ENCODE measurements at regions of chr21 and their contacts with region 1.

Region 1: DNA sequence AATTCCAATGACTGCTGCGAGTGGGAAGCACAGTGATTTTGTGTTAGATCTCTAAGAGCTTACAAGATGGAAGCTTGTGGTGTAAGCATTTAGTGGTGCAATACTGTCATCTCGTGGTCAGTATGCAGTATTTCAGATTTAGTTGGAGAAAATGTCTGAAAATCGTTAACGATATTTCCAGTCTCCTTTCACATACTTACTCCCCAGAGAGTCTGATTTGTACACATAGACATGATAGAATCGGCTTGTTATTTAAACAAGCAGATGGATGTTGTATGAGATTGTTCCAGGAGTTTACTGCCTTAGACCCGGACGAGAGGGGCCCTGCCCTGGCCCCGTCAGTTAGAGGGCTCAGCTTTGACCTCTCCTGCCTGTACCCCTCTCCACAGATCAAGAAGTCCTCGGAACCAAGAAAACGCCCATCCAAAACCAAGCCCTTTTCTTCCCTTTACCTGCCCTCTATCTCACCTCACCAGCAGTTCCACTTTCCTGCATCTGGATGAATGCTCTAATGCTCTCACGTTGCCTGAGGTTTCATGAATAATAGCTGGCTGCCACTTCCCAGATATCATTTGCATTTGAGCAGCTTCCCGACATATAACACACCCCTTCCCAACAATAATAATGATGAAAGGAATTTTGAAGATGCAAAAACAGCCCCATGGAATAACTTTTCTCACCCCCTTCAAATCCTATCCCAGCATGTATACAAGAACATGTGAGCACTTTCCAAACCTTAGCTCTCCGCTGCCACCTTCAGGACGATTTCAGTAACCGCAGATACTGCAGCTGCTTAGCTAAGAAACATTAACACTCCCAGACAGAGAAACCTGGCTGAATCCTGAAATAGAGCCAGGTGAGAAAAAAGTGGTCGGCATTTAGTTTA is 247.3 kb downstream of the LTN1 start:
- DNase-seq: peak; percentile 44 to 51
- H3K4me3 ChIP-seq: peak overlapping the region; percentile 37; the same call in 1 of the 2 replicates
- H3K27ac ChIP-seq: no peak overlapping the region
- H3K4me1 ChIP-seq: no peaks in the 10 kb centered on the region
- H3K27me3 ChIP-seq: no peaks in the 10 kb centered on the region
- CTCF ChIP-seq: peak; percentile 74

Region 2: GRCh38 chr21:26769613-26770188 is 1975.7 kb before region 1 on chr21:
- CTCF ChIA-PET with region 1: no interaction called
- POLR2A ChIA-PET with region 1: no interaction called
- intact Hi-C with region 1: loop called (anchors 1 kb)
- DNase-seq: no peak
- H3K4me3 ChIP-seq: no peak overlapping the region
- H3K27ac ChIP-seq: no peak overlapping the region
- H3K4me1 ChIP-seq: no peaks in the 10 kb centered on the region
- H3K27me3 ChIP-seq: no peaks in the 10 kb centered on the region
- CTCF ChIP-seq: peak; percentile 45

Region 3: GRCh38 chr21:27564684-27565301 is 1180.6 kb before region 1 on chr21:
- CTCF ChIA-PET with region 1: no interaction called
- POLR2A ChIA-PET with region 1: no interaction called
- intact Hi-C with region 1: loop called (anchors 1 kb)
- DNase-seq: peak in 1 of 2 experiments; percentile 0
- H3K4me3 ChIP-seq: no peak overlapping the region
- H3K27ac ChIP-seq: no peak overlapping the region
- H3K4me1 ChIP-seq: no peaks in the 10 kb centered on the region
- H3K27me3 ChIP-seq: no peaks in the 10 kb centered on the region
- CTCF ChIP-seq: peak; percentile 47

Region 4: DNA sequence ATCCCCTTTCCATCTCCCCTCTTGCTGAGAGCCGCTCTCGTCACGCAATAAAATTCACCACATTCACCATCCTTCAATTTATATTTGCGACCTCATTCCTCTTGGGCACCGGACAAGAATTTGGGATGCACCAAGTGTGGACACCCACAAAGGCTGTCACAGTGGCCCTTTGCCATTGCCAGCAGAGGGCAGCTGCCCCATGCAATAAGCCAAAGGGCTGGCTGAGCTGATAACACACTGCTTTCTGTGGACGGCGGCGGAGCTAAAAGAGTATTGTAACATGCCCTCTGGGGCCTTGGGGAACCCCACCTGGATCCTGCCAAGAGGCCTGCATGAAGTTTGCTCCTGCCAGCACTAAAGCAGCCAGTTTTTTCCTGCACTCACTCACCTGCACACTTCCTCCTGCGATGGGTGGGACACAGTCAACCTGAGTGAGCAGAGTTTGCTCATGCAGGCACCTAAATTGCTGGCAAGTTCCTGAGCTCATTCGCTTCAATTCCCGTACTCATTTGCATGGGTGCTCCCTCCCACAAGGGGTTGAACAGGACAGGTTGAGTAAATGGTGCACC is 986.2 kb before region 1 on chr21:
- CTCF ChIA-PET with region 1: interaction called, 3 read pairs
- POLR2A ChIA-PET with region 1: no interaction called
- intact Hi-C with region 1: loop called (anchors 1 kb)
- DNase-seq: peak in 1 of 2 experiments; percentile 27
- H3K4me3 ChIP-seq: no peak overlapping the region
- H3K27ac ChIP-seq: no peak overlapping the region
- H3K4me1 ChIP-seq: no peaks in the 10 kb centered on the region
- H3K27me3 ChIP-seq: no peaks in the 10 kb centered on the region
- CTCF ChIP-seq: peak; percentile 40; the same call in 1 of the 2 replicates

Region 5: DNA sequence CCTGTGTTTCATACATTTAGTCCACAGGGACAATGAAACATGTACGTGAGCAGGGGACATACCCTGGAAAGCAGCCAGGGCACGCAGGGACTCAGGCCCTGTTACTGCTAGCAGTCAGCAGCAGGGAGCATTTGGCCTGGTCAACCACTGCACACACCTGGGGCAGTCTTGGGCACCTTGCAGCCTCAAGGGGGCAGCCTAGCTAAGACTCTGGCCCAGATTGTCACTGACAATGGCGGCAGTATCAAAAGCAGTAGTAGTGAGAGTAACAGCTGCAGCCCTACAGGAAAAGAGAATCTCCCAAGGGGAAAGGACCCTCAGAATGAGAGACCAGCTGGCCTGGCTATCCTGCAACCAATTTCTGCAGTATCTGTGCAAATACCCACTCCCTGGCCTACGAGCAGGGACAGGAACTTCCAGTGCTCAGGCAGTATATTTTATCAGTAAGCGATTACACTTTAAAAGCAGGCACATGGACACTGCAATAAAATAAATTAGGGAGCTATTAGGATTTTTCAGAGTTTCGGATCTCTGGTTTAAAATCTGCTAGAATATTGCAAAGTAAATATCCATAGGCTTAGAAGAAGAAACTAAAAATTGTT is 228.3 kb before region 1 on chr21:
- CTCF ChIA-PET with region 1: interaction called, 3 read pairs
- POLR2A ChIA-PET with region 1: no interaction called
- intact Hi-C with region 1: loop called (anchors 2 kb)
- DNase-seq: peak in 1 of 2 experiments; percentile 28
- H3K4me3 ChIP-seq: no peak overlapping the region
- H3K27ac ChIP-seq: no peak overlapping the region
- H3K4me1 ChIP-seq: no peaks in the 10 kb centered on the region
- H3K27me3 ChIP-seq: no peaks in the 10 kb centered on the region
- CTCF ChIP-seq: peak; percentile 54; the same call in 1 of the 2 replicates

Region 6: DNA sequence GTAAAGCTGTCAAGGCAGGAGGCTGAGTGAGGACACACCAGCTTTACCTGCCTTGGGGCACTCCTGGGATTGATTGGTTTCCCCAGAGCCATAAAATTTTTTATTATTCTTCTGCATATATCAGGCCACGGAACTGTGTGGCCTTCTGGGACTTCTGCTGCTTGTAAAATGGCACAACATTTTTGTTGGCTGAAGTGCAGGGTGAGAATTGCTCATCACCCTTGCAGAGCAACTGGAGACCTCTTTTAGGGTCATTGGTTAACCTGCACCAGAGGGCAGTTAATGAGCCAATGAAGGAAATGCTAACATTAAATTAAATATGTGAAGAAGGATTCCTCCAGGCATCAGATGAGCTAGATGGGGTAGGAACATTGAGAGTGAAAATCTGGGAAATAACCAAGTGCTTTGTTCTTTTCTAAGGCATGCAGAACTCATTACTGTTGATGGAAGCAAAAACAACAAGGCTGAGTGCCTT is 159.6 kb after region 1 on chr21:
- CTCF ChIA-PET with region 1: no interaction called
- POLR2A ChIA-PET with region 1: no interaction called
- intact Hi-C with region 1: no loop called
- DNase-seq: no peak
- H3K4me3 ChIP-seq: no peak overlapping the region
- H3K27ac ChIP-seq: no peak overlapping the region
- H3K4me1 ChIP-seq: no peaks in the 10 kb centered on the region
- H3K27me3 ChIP-seq: no peaks in the 10 kb centered on the region
- CTCF ChIP-seq: no peak

Region 7: GRCh38 chr21:28943631-28944030 is 198.3 kb after region 1 on chr21:
- CTCF ChIA-PET with region 1: no interaction called
- POLR2A ChIA-PET with region 1: no interaction called
- intact Hi-C with region 1: loop called (anchors 5 kb)
- DNase-seq: no peak
- H3K4me3 ChIP-seq: no peak overlapping the region
- H3K27ac ChIP-seq: no peak overlapping the region
- H3K4me1 ChIP-seq: no peaks in the 10 kb centered on the region
- H3K27me3 ChIP-seq: no peaks in the 10 kb centered on the region
- CTCF ChIP-seq: no peak

Measured in PC-9 (cell line).